Endothelial cell of umbilical vein (primary cell): ENCODE measurements at regions of chr16 and their contacts with region 1.

Region 1: DNA sequence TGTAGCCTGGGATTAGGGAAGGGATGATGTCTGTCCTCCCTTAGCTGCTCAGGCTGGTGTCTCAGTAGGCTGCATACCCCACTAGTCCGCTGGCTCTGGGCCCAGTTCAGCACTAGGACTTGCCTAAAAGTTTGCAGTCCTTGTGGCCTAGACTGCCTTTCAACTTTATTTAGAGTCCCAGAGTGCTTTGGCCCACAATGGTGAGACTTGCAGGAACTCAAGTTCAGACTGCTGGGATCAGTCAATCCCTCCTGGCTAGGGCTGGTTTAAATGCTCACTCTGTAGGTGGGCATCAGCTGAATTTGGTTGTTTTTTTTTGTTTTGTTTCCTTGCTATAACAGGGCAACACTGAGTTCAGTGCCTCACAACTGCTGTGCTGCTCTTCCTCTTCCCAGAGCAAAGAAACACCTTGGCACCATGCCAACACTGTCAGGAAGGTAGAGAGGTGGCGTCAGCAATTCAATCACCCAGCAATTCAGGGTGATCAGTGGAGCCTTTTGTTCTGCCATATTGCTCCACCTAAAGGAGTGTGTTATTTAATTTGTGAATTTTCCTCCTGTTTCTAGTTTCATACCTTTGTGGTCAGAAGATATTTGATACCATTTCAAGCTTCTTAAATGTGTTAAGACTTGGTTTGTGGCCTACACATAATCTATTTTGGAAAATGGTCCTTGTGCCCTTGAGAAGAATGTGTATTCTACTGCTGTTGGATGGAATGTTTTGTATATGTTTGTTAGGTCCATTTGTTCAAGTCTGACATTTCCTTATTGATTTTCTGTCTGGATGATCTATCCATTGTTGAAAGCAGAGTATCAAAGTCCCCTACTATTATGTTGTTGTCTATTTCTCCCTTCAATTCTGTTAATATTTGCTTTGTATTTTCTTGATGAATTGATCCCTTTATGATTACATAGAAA is 284.0 kb upstream of the PMFBP1 start:
- DNase-seq: peak; percentile 20
- H3K4me3 ChIP-seq: no peak overlapping the region
- H3K27ac ChIP-seq: no peak overlapping the region
- H3K4me1 ChIP-seq: no peaks in the 10 kb centered on the region
- H3K27me3 ChIP-seq: no peaks in the 10 kb centered on the region
- CTCF ChIP-seq: no peak
- POLR2A ChIP-seq: no peak

Region 2: DNA sequence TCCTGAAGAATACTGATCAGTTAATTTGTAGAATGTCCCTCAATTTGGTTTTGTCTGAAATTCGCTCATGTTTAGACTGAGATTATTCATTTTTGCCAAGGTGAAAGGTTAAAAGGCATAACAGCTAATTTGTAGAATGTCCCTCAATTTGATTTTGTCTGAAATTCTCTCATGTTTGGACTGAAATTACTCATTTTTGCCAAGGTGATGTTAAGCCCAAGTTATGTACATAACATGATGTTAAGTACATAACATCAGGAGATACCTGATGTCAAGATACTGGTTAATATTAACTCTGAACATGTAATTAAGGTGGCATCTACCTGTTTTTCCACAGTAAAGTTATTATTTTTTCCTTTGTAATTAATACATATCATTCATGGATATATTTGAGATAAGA is 40.6 kb before region 1 on chr16:
- CTCF ChIA-PET with region 1: no interaction called
- POLR2A ChIA-PET with region 1: no interaction called
- dilution Hi-C with region 1: no loop called
- intact Hi-C with region 1: loop called (anchors 1 kb)
- DNase-seq: no peak
- H3K4me3 ChIP-seq: no peak overlapping the region
- H3K27ac ChIP-seq: no peak overlapping the region
- H3K4me1 ChIP-seq: no peaks in the 10 kb centered on the region
- H3K27me3 ChIP-seq: no peaks in the 10 kb centered on the region
- CTCF ChIP-seq: no peak
- POLR2A ChIP-seq: no peak